Activated CD4-positive, alpha-beta memory T cell treated with anti-CD3 and anti-CD28 coated beads, Interleukin-2, amount 10 ng/mL, durations not matched to agents 7 days and 5 days (primary cell): ENCODE measurements at regions of chr16 and their contacts with region 1.

Region 1: GRCh38 chr16:19113453-19114351 is at the start of gene ITPRIPL2:
- DNase-seq: peak; percentile 38
- H3K4me3 Mint-ChIP-seq: peak within 1 kb of the TSS; percentile 77
- H3K27ac Mint-ChIP-seq: peak within 1 kb of the TSS; percentile 72
- H3K4me1 Mint-ChIP-seq: peaks cover 39% of the 10 kb centered on the region
- H3K27me3 Mint-ChIP-seq: peaks cover 12% of the 10 kb centered on the region
- total RNA-seq, gene ITPRIPL2: 11.1 to 11.2 TPM

Region 2: GRCh38 chr16:19073863-19074262 is 39.8 kb before region 1 on chr16:
- CTCF ChIA-PET with region 1: no interaction called
- POLR2A ChIA-PET with region 1: no interaction called
- DNase-seq: no peak
- H3K4me3 Mint-ChIP-seq: no peak overlapping the region
- H3K27ac Mint-ChIP-seq: no peak overlapping the region
- H3K4me1 Mint-ChIP-seq: peaks cover 4% of the 10 kb centered on the region
- H3K27me3 Mint-ChIP-seq: no peaks in the 10 kb centered on the region

Region 3: GRCh38 chr16:19127674-19128131 is 14.0 kb after region 1 on chr16:
- CTCF ChIA-PET with region 1: no interaction called
- POLR2A ChIA-PET with region 1: interaction called, 10 read pairs
- DNase-seq: no peak
- H3K4me3 Mint-ChIP-seq: peak overlapping the region; percentile 1
- H3K27ac Mint-ChIP-seq: peak overlapping the region; percentile 47
- H3K4me1 Mint-ChIP-seq: peaks cover 51% of the 10 kb centered on the region
- H3K27me3 Mint-ChIP-seq: no peaks in the 10 kb centered on the region

Region 4: GRCh38 chr16:19236561-19237209 is 123.0 kb after region 1 on chr16:
- CTCF ChIA-PET with region 1: no interaction called
- POLR2A ChIA-PET with region 1: no interaction called
- DNase-seq: no peak
- H3K4me3 Mint-ChIP-seq: no peak overlapping the region
- H3K27ac Mint-ChIP-seq: no peak overlapping the region
- H3K4me1 Mint-ChIP-seq: no peaks in the 10 kb centered on the region
- H3K27me3 Mint-ChIP-seq: no peaks in the 10 kb centered on the region